ENCODE measurements at regions of chr16 and their contacts with region 1.

Region 1: GRCh38 chr16:89860747-89861304 is 12.6 kb upstream of the TCF25 start:
- DNase-seq: peak; percentile 83
- H3K4me3 Mint-ChIP-seq: no peak overlapping the region
- H3K27ac Mint-ChIP-seq: no peak overlapping the region
- H3K4me1 Mint-ChIP-seq: peaks cover 46% of the 10 kb centered on the region
- H3K27me3 Mint-ChIP-seq: peaks cover 25% of the 10 kb centered on the region

Region 2: DNA sequence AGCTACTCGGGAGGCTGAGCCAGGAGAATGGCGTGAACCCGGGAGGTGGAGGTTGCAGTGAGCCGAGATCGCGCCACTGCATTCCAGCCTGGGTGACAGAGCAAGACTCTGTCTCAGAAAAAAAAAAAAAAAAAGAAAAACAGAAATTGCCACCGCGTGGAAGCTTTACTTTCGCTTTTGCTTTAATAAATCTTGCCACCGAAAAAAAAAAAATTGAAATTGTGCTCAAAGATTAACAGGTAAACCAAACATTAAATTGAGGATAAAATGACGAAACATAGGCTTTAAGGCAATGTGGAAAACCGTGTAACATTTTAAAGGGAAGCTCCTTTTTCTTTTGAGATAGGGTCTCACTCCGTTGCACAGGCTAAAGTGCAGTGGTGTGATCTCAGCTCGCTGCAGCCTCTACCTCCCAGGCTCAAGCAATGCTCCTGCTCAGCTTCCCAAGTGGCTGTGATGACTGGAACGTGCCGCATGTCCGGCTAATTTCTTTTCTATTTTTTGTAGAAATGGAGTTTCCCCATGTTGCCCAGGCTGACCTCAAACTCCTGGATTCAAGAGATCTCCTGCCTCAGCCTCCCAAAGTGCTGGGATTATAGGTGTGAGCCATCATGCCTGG is 99.4 kb before region 1 on chr16:
- CTCF ChIA-PET with region 1: interaction called, 11 read pairs
- DNase-seq: peak; percentile 35
- H3K4me3 Mint-ChIP-seq: peak overlapping the region; percentile 68
- H3K27ac Mint-ChIP-seq: peak overlapping the region; percentile 92
- H3K4me1 Mint-ChIP-seq: peaks cover 41% of the 10 kb centered on the region
- H3K27me3 Mint-ChIP-seq: no peaks in the 10 kb centered on the region

Region 3: DNA sequence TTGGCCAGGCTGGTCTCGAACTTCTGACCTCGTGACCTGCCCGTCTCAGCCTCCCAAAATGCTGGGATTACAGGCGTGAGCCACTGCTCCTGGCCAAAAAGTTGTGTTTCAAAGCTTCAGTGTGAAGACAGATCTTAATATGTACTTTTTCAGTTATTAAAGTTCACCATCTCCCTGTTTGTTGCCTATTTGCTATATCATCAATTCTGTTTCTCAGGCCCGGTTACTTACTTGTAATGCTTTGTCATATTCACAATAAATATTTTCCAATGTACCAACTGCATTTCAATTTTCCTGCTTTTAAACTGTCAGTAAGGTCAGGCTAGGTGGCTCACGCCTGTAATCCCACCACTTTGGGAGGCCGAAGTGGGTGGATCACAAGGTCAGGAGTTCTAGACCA is 66.9 kb before region 1 on chr16:
- CTCF ChIA-PET with region 1: interaction called, 13 read pairs
- DNase-seq: no peak
- H3K4me3 Mint-ChIP-seq: no peak overlapping the region
- H3K27ac Mint-ChIP-seq: no peak overlapping the region
- H3K4me1 Mint-ChIP-seq: peaks cover 2% of the 10 kb centered on the region
- H3K27me3 Mint-ChIP-seq: no peaks in the 10 kb centered on the region

Region 4: GRCh38 chr16:89873972-89874689 is 13.3 kb after region 1 on chr16:
- CTCF ChIA-PET with region 1: interaction called, 12 read pairs
- DNase-seq: peak; percentile 91
- H3K4me3 Mint-ChIP-seq: peak overlapping the region; percentile 89
- H3K27ac Mint-ChIP-seq: peak overlapping the region; percentile 99
- H3K4me1 Mint-ChIP-seq: peaks cover 24% of the 10 kb centered on the region
- H3K27me3 Mint-ChIP-seq: no peaks in the 10 kb centered on the region